CD4-positive, alpha-beta memory T cell (primary cell): ENCODE measurements at regions of chr2 and their contacts with region 1.

Region 1: DNA sequence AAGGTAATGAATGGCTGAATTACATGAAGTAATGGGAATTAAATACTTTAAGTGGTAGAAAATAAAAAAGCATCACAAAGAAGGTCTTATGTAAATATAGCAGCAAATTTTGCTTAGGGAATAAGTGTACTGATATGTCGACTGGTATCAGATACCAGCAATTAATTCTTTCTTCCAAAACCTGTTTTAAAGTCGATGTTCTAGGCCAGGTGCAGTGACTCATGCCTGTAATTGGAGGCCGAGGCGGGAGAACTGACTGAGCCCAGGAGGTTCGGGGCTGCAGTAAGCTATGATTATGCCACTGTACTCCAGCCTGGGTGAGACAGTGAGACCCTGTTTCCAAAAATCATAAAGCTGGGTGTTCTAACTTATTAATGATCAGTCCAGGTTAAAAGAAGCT is 30.3 kb downstream of the SP3 start:
- DNase-seq: no peak
- H3K4me3 ChIP-seq: no peak overlapping the region
- H3K4me3 Mint-ChIP-seq: peak overlapping the region in 2 of 8 donors; percentile 0 to 41
- H3K27ac ChIP-seq: no peak overlapping the region
- H3K27ac Mint-ChIP-seq: peak overlapping the region in 1 of 7 donors; percentile 29
- H3K4me1 ChIP-seq: peaks cover 65% of the 10 kb centered on the region
- H3K4me1 Mint-ChIP-seq: peaks cover 29 to 33% (median 30%) of the 10 kb centered on the region in 4 donors
- H3K27me3 ChIP-seq: no peaks in the 10 kb centered on the region
- H3K27me3 Mint-ChIP-seq: no peaks in the 10 kb centered on the region

Region 2: GRCh38 chr2:173922760-173923159 is 12.1 kb before region 1 on chr2:
- CTCF ChIA-PET with region 1: no interaction called
- POLR2A ChIA-PET with region 1: no interaction called
- intact Hi-C with region 1: loop called (anchors 2 kb)
- DNase-seq: no peak
- H3K4me3 ChIP-seq: no peak overlapping the region
- H3K4me3 Mint-ChIP-seq: peak overlapping the region in 1 of 8 donors; percentile 32
- H3K27ac ChIP-seq: no peak overlapping the region
- H3K27ac Mint-ChIP-seq: peak overlapping the region in 4 of 7 donors; percentile 9 to 84 (median 52)
- H3K4me1 ChIP-seq: peaks cover 74% of the 10 kb centered on the region
- H3K4me1 Mint-ChIP-seq: peaks cover 56 to 86% (median 69%) of the 10 kb centered on the region in 4 donors
- H3K27me3 ChIP-seq: no peaks in the 10 kb centered on the region
- H3K27me3 Mint-ChIP-seq: no peaks in the 10 kb centered on the region

Region 3: GRCh38 chr2:174124181-174124580 is 189.3 kb after region 1 on chr2:
- CTCF ChIA-PET with region 1: no interaction called
- POLR2A ChIA-PET with region 1: no interaction called
- intact Hi-C with region 1: no loop called
- DNase-seq: no peak
- H3K4me3 ChIP-seq: no peak overlapping the region
- H3K4me3 Mint-ChIP-seq: no peak overlapping the region
- H3K27ac ChIP-seq: no peak overlapping the region
- H3K27ac Mint-ChIP-seq: no peak overlapping the region
- H3K4me1 ChIP-seq: no peaks in the 10 kb centered on the region
- H3K4me1 Mint-ChIP-seq: no peaks in the 10 kb centered on the region
- H3K27me3 ChIP-seq: no peaks in the 10 kb centered on the region
- H3K27me3 Mint-ChIP-seq: no peaks in the 10 kb centered on the region